SK-N-SH (cell line): ENCODE measurements at regions of chr3 and their contacts with region 1.

Region 1: DNA sequence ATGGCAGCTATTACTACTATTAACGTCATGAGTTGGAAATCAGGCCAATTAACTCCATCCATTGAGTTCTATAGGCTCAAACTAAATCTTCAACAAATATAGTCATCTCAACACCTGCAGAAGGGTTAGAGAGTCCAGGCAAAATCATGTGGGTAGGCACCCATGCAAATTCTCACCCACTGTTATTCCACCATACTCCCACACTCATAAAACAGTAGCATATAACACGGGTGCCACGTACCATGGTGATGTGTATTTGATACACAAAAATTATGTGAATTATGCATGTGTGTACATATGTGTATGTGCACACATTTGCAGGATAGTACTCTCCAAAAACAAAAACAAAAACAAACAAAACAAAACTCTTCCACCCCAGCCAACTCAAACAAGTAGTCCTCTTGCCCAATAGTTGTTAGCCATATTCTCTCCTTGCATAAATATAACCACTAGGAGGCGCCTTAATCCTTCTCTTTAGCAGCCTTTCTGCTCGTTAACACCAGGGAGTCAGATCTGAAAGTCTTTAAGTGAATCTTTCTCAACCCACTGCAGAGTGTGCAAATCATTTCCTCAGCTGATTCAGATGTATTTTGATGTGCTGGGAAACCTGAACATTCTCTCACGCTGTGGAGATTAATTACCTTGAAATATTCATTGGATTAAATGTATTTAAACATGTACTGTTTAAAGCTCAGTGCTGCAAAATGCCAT is 38.0 kb upstream of the COPB2 start:
- DNase-seq: peak; percentile 69
- H3K4me3 ChIP-seq: peak overlapping the region in 1 of 2 experiments; percentile 24; a peak in 1 of 4 replicates
- H3K27ac ChIP-seq: no peak overlapping the region
- H3K4me1 ChIP-seq: no peaks in the 10 kb centered on the region
- H3K27me3 ChIP-seq: no peaks in the 10 kb centered on the region
- CTCF ChIP-seq: peak; percentile 90
- EP300 ChIP-seq: no peak
- RAD21 ChIP-seq: peak; percentile 96

Region 2: GRCh38 chr3:139281522-139282196 is 145.8 kb before region 1 on chr3:
- CTCF ChIA-PET with region 1: no interaction called
- POLR2A ChIA-PET with region 1: no interaction called
- DNase-seq: peak; percentile 53
- H3K4me3 ChIP-seq: no peak overlapping the region
- H3K27ac ChIP-seq: no peak overlapping the region; a peak in 1 of 4 replicates
- H3K4me1 ChIP-seq: peaks cover 0 to 14% of the 10 kb centered on the region in 2 experiments; a peak in 2 of 4 replicates
- H3K27me3 ChIP-seq: no peaks in the 10 kb centered on the region
- CTCF ChIP-seq: no peak
- EP300 ChIP-seq: no peak
- RAD21 ChIP-seq: no peak

Region 3: GRCh38 chr3:139468399-139468798 is 41.0 kb after region 1 on chr3:
- CTCF ChIA-PET with region 1: interaction called, 10 read pairs
- POLR2A ChIA-PET with region 1: no interaction called
- DNase-seq: no peak
- H3K4me3 ChIP-seq: no peak overlapping the region
- H3K27ac ChIP-seq: no peak overlapping the region
- H3K4me1 ChIP-seq: no peaks in the 10 kb centered on the region
- H3K27me3 ChIP-seq: no peaks in the 10 kb centered on the region
- CTCF ChIP-seq: no peak
- EP300 ChIP-seq: no peak
- RAD21 ChIP-seq: no peak

Region 4: GRCh38 chr3:139533781-139534443 is 106.5 kb after region 1 on chr3:
- CTCF ChIA-PET with region 1: interaction called, 25 read pairs
- POLR2A ChIA-PET with region 1: no interaction called
- DNase-seq: peak; percentile 71
- H3K4me3 ChIP-seq: no peak overlapping the region; a peak in 2 of 4 replicates
- H3K27ac ChIP-seq: peak overlapping the region; percentile 60 to 100
- H3K4me1 ChIP-seq: peaks cover 33 to 83% of the 10 kb centered on the region in 2 experiments
- H3K27me3 ChIP-seq: no peaks in the 10 kb centered on the region
- CTCF ChIP-seq: no peak
- EP300 ChIP-seq: 0 out of 4 replicates have a peak, but pooled peaks have one; percentile 3 to 12
- RAD21 ChIP-seq: no peak

Region 5: GRCh38 chr3:139540651-139541151 is 113.3 kb after region 1 on chr3:
- CTCF ChIA-PET with region 1: interaction called, 25 read pairs
- POLR2A ChIA-PET with region 1: no interaction called
- DNase-seq: peak; percentile 46
- H3K4me3 ChIP-seq: peak overlapping the region; percentile 66 to 68; a peak in 3 of 4 replicates
- H3K27ac ChIP-seq: peak overlapping the region in 1 of 2 experiments; percentile 100; a peak in 2 of 4 replicates
- H3K4me1 ChIP-seq: peaks cover 20 to 46% of the 10 kb centered on the region in 2 experiments
- H3K27me3 ChIP-seq: no peaks in the 10 kb centered on the region
- CTCF ChIP-seq: no peak
- EP300 ChIP-seq: no peak
- RAD21 ChIP-seq: no peak

Region 6: GRCh38 chr3:139552632-139553365 is 125.4 kb after region 1 on chr3:
- CTCF ChIA-PET with region 1: interaction called, 12 read pairs
- POLR2A ChIA-PET with region 1: no interaction called
- DNase-seq: no peak
- H3K4me3 ChIP-seq: no peak overlapping the region
- H3K27ac ChIP-seq: no peak overlapping the region
- H3K4me1 ChIP-seq: peaks cover 0 to 6% of the 10 kb centered on the region in 2 experiments; a peak in 1 of 4 replicates
- H3K27me3 ChIP-seq: no peaks in the 10 kb centered on the region
- CTCF ChIP-seq: no peak
- EP300 ChIP-seq: no peak
- RAD21 ChIP-seq: no peak